ENCODE measurements at regions of chr10 and their contacts with region 1.

Region 1: GRCh38 chr10:28676968-28677887 is at the start of gene BAMBI:
- DNase-seq: peak; percentile 72 to 96 (median 86)
- ATAC-seq: peak; percentile 96
- H3K4me3 ChIP-seq: peak within 1 kb of the TSS; percentile 59
- H3K4me3 Mint-ChIP-seq: peak within 1 kb of the TSS; percentile 85
- H3K27ac ChIP-seq: no peak within 1 kb of the TSS
- H3K27ac Mint-ChIP-seq: no peak within 1 kb of the TSS
- H3K4me1 ChIP-seq: peaks cover 27% of the 10 kb centered on the region
- H3K4me1 Mint-ChIP-seq: peaks cover 31% of the 10 kb centered on the region
- H3K27me3 ChIP-seq: peaks cover 48 to 70% of the 10 kb centered on the region in 2 experiments
- H3K27me3 Mint-ChIP-seq: peaks cover 82% of the 10 kb centered on the region
- CTCF ChIP-seq: peak; percentile 62
- total RNA-seq, gene BAMBI: 2.5 to 2.9 TPM

Region 2: DNA sequence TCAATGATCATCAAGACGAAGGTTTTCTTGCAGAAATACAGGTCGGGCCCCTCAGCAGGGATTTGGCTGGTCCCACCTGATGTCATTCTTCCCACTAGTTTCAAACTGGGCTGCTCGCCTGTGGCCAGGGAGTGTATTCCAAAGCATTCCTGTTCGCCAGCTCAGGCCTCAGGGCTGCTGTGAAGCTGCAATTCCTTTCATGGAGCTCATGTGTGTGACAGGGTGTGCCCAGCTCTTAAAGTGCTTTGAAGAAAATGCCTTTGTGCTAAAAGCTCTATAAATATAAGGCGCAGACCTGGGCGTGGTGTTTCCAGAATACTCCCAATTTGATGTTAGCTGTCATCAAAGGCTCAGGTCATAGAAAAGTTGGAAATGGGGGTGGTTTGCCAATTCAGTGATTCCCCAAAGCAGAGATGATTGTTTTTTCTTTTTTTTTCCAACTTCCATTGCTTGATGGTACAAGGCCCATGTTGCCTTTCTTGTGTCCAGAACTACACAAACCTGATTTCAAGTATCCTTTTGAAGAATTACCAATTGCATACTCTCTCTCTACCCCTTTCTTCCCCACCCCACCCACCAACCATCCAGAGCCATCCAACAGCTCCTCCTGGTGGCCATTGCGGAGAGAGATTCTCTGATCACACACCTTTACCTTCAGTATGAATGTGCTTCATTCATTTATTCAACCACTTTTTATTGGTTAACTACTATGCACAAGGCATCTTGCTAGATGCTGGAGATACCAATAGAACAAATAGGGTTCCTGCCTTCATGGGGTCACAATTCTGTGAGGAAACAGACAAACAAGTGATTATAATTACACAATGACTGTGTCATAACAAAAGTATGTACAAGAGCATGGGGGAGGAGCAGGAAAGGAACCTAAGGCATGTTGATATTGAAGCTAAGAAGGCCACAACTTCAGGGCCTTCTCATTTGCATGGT is 314.4 kb after region 1 on chr10:
- CTCF ChIA-PET with region 1: no interaction called
- POLR2A ChIA-PET with region 1: no interaction called
- intact Hi-C with region 1: loop called in 1 of 2 experiments (anchors 5 kb)
- DNase-seq: peak in 9 of 14 experiments; percentile 3 to 53 (median 28)
- ATAC-seq: no peak
- H3K4me3 ChIP-seq: no peak overlapping the region
- H3K4me3 Mint-ChIP-seq: no peak overlapping the region
- H3K27ac ChIP-seq: no peak overlapping the region
- H3K27ac Mint-ChIP-seq: no peak overlapping the region
- H3K4me1 ChIP-seq: no peaks in the 10 kb centered on the region
- H3K4me1 Mint-ChIP-seq: no peaks in the 10 kb centered on the region
- H3K27me3 ChIP-seq: no peaks in the 10 kb centered on the region
- H3K27me3 Mint-ChIP-seq: peaks cover 5% of the 10 kb centered on the region
- CTCF ChIP-seq: no peak

Region 3: DNA sequence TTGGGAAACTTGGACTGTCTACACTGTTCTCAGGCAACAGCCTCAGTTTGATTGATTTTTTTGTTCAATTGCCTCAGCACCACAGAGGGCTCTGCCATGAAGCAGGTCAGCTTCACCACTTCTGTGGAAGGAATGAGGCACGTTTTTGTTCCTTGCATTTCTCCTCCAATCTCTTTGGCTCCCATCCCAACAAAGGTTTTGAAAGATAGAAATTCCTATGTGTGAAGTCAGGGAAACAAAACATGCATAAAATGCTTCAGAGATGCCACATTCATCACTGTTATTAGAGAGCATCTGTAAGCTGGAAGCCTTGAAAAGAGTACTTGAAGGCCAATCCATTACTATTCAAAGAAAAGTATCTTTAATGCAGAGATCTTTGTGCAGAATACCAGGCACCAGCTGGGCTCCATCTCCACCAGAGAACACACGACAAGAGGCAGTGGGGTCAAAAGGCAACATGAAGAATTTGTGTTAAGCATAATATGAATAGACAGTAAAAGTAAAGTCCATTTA is 362.5 kb after region 1 on chr10:
- CTCF ChIA-PET with region 1: no interaction called
- POLR2A ChIA-PET with region 1: no interaction called
- intact Hi-C with region 1: no loop called
- DNase-seq: no peak
- ATAC-seq: no peak
- H3K4me3 ChIP-seq: no peak overlapping the region
- H3K4me3 Mint-ChIP-seq: no peak overlapping the region
- H3K27ac ChIP-seq: no peak overlapping the region
- H3K27ac Mint-ChIP-seq: no peak overlapping the region
- H3K4me1 ChIP-seq: no peaks in the 10 kb centered on the region
- H3K4me1 Mint-ChIP-seq: no peaks in the 10 kb centered on the region
- H3K27me3 ChIP-seq: no peaks in the 10 kb centered on the region
- H3K27me3 Mint-ChIP-seq: peaks cover 15% of the 10 kb centered on the region
- CTCF ChIP-seq: no peak

Region 4: GRCh38 chr10:29681676-29682448 is 1004.6 kb after region 1 on chr10:
- CTCF ChIA-PET with region 1: no interaction called
- POLR2A ChIA-PET with region 1: no interaction called
- intact Hi-C with region 1: loop called in 1 of 2 experiments (anchors 5 kb)
- DNase-seq: peak; percentile 36 to 94 (median 60)
- ATAC-seq: peak; percentile 93
- H3K4me3 ChIP-seq: peak overlapping the region; percentile 26
- H3K4me3 Mint-ChIP-seq: peak overlapping the region; percentile 83
- H3K27ac ChIP-seq: peak overlapping the region; percentile 58 to 86
- H3K27ac Mint-ChIP-seq: peak overlapping the region; percentile 93
- H3K4me1 ChIP-seq: peaks cover 70% of the 10 kb centered on the region
- H3K4me1 Mint-ChIP-seq: peaks cover 97% of the 10 kb centered on the region
- H3K27me3 ChIP-seq: no peaks in the 10 kb centered on the region
- H3K27me3 Mint-ChIP-seq: no peaks in the 10 kb centered on the region
- CTCF ChIP-seq: no peak